Psoas muscle (tissue), 8 donors: ENCODE measurements at regions of chr7 and their contacts with region 1.

Region 1: DNA sequence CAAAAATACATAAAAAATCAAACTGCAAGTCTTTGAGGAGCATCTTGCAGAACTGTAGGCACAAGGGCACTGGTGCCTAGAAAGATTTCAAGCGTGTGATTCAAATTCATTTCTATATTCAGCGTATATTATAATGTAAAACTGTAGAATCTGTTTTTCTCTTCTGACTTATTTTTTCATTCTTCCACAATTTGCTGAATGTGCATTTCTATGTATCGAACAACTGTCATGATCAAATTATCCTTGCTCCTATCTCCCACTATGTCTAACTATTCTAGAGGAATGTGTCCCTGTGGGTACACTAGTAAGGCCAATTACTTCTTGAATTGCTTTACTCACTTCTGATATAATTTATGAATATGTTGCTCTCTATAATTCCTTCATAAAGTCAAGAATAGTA is 283.0 kb upstream of the MAGI2 start:
- DNase-seq: no peak
- ATAC-seq: no peak
- H3K4me3 ChIP-seq: no peak overlapping the region
- H3K27ac ChIP-seq: no peak overlapping the region
- H3K4me1 ChIP-seq: no peaks in the 10 kb centered on the region
- H3K27me3 ChIP-seq: no peaks in the 10 kb centered on the region
- CTCF ChIP-seq: no peak

Region 2: GRCh38 chr7:79302293-79302692 is 434.1 kb before region 1 on chr7:
- intact Hi-C with region 1: loop called in 1 of 2 experiments (anchors 5 kb)
- DNase-seq: no peak
- ATAC-seq: no peak
- H3K4me3 ChIP-seq: no peak overlapping the region
- H3K27ac ChIP-seq: no peak overlapping the region
- H3K4me1 ChIP-seq: no peaks in the 10 kb centered on the region
- H3K27me3 ChIP-seq: no peaks in the 10 kb centered on the region
- CTCF ChIP-seq: no peak

Region 3: DNA sequence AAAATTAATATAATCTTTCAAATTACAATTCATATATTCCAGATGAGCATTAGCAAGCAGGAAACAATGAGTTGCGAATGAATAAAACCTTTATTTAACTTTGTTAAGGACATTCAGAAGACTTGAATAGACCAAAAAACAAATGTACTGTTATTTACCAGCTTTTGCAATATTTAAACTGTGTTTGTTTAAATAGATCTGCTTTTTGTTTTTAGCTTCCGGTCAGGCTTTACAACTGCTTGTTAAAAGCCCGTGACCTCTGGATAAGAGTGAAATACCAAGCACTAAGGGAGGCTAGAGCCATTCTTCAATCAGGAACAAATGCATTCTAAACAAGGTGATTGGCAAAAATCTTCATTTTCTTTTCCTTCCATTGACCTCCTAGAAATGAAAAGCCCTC is 213.4 kb after region 1 on chr7:
- intact Hi-C with region 1: no loop called
- DNase-seq: no peak
- ATAC-seq: no peak
- H3K4me3 ChIP-seq: no peak overlapping the region
- H3K27ac ChIP-seq: no peak overlapping the region
- H3K4me1 ChIP-seq: no peaks in the 10 kb centered on the region
- H3K27me3 ChIP-seq: no peaks in the 10 kb centered on the region
- CTCF ChIP-seq: no peak